ENCODE measurements at regions of chr2 and their contacts with region 1.

Region 1: DNA sequence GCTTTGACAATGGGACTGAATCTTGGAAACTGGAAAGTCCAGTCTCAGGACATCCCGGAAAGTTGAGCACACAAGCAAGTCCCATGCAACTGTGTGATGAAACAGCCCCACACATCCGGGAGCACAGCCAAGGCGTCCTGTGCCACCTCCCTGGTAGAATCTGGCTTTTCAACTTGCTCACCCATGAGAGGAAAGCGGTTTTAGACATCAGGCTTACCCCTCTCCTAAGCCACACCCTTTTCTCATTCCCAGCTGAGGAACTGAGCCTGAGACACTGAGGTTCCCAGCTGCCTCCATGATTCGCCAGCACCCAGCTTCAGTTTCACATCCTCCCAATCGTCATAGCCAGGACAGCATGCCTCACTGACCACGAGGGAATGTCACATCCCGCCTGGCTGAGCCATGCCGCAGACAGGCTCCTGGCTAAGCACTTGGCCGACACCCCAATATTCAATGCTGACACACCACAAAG is 60.3 kb downstream of the STEAP3 start:
- DNase-seq: peak; percentile 88

Region 2: DNA sequence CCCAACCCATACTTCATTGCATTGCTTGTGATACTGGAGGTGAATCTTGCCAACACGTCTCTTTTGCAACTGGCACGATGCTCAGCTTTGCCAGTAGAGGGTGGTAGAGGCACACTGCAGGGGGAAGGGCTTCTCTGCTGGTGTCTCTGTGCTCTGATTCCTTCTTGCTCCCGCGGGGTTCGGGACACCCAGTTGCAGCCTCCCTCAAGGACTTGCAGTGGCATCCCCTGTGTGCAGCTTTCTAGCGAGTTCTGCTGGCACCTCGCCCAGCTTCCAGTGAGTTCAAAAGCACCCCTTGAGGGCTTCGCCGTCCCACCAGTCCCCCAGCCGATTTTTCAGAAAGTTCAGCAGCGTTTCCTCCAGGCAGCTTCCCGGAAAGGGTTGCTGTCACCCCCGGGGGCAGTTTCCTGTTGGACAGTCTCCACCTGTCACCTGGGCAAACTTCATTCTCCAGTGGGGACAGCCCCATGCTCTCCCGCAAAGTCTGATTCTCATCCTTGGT is 401.1 kb before region 1 on chr2:
- intact Hi-C with region 1: loop called in 1 of 2 experiments (anchors 10 kb)
- DNase-seq: peak; percentile 88

Region 3: GRCh38 chr2:119011162-119011909 is 272.6 kb before region 1 on chr2:
- intact Hi-C with region 1: loop called in 1 of 2 experiments (anchors 10 kb)
- DNase-seq: no peak

Region 4: GRCh38 chr2:119248311-119248710 is 35.6 kb before region 1 on chr2:
- intact Hi-C with region 1: no loop called
- DNase-seq: no peak